ENCODE measurements at regions of chr11 and their contacts with region 1.

Region 1: GRCh38 chr11:65859200-65859811 is 927 bp upstream of the MUS81 start:
- DNase-seq: peak; percentile 88
- ATAC-seq: peak; percentile 74
- H3K4me3 ChIP-seq: peak overlapping the region; percentile 85 to 99
- H3K27ac ChIP-seq: peak overlapping the region; percentile 98
- H3K4me1 ChIP-seq: peaks cover 45% of the 10 kb centered on the region
- H3K27me3 ChIP-seq: no peaks in the 10 kb centered on the region
- CTCF ChIP-seq: no peak

Region 2: GRCh38 chr11:64291752-64292459 is 1567.4 kb before region 1 on chr11:
- CTCF ChIA-PET with region 1: no interaction called
- POLR2A ChIA-PET with region 1: interaction called, 26 read pairs
- in situ Hi-C with region 1: no loop called
- intact Hi-C with region 1: no loop called
- DNase-seq: no peak
- ATAC-seq: peak; percentile 23; the same call in 1 of the 2 replicates
- H3K4me3 ChIP-seq: peak overlapping the region; percentile 11 to 37; a peak in 3 of 4 replicates
- H3K27ac ChIP-seq: no peak overlapping the region
- H3K4me1 ChIP-seq: peaks cover 11% of the 10 kb centered on the region
- H3K27me3 ChIP-seq: no peaks in the 10 kb centered on the region; the same call in none of the 2 replicates
- CTCF ChIP-seq: no peak

Region 3: GRCh38 chr11:65551572-65552398 is 307.5 kb before region 1 on chr11:
- CTCF ChIA-PET with region 1: no interaction called
- POLR2A ChIA-PET with region 1: no interaction called
- in situ Hi-C with region 1: no loop called
- intact Hi-C with region 1: loop called (anchors 10 kb)
- DNase-seq: no peak
- ATAC-seq: peak; percentile 80
- H3K4me3 ChIP-seq: no peak overlapping the region
- H3K27ac ChIP-seq: no peak overlapping the region
- H3K4me1 ChIP-seq: peaks cover 48% of the 10 kb centered on the region
- H3K27me3 ChIP-seq: no peaks in the 10 kb centered on the region
- CTCF ChIP-seq: peak; percentile 96; the same call in 1 of the 2 replicates

Region 4: DNA sequence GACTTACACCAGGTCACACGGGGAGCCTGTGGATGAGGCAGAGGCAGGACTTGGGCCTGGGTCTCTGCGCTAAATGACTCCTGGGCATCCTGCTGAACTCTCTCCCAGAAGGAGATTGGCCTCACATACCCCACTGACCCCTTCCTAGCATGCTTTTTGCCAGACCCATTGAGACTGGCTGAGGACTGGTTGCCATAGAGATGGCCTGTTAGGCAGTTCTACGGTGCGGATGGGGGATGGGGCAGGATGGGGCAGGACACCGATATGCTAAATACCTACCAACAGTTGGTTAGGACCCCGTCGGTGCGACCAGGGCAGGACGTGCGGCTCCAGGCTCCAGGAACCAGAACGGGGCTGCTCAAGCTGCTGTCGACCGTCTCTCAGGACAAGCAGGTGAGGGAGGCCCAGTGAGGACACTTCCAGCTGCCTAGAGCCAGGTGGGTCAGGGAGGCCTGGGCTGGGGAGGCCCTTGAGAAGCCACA is 86.2 kb after region 1 on chr11 and contains the start of gene TSGA10IP:
- CTCF ChIA-PET with region 1: no interaction called
- POLR2A ChIA-PET with region 1: no interaction called
- in situ Hi-C with region 1: no loop called
- intact Hi-C with region 1: no loop called
- DNase-seq: no peak
- ATAC-seq: 0 out of 2 replicates have a peak, but pooled peaks have one; percentile 10
- H3K4me3 ChIP-seq: no peak within 1 kb of the TSS
- H3K27ac ChIP-seq: no peak within 1 kb of the TSS
- H3K4me1 ChIP-seq: no peaks in the 10 kb centered on the region
- H3K27me3 ChIP-seq: no peaks in the 10 kb centered on the region
- CTCF ChIP-seq: no peak
- total RNA-seq, gene TSGA10IP: not detected

Measured in Panc1 (cell line).